GM12878 (cell line): ENCODE measurements at regions of chr2 and their contacts with region 1.

Region 1: DNA sequence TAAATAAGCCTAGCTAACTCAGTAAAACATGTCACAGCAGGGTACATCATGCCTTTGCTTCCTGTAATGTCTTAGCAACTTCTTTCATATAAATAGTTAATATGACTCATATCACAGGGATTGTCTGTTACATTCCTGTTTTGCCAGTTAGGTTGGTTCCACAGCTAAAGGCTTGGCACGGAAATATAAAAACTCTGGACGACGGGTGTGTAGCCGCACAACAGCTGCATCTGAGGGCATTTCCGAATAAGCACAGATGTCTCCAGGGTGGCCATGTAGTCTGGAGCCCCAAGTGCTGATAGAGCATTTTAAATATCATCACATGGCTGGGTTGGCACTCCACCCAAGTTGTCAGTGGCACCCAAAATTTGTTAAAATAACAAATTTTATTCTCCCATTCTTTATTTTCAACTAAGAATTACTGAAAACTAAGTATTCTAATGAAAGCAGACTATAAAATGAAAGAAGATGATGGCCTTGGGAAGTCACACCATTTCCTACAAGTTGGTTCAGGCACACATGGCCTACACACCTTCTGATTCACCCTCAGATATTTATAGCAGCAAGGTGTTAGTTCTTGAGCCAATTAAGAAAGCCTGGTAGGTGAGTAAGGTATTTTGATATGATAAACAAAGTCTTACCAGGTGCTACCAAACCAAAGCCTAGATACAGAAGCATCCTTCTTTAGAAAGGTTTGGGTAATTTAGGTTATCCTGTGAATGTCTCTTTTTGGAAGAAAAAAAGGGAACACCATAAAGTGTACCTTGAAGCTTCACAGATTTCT is 61.8 kb upstream of the STK17B start:
- DNase-seq: no peak
- ATAC-seq: peak; percentile 26
- H3K4me3 ChIP-seq: no peak overlapping the region
- H3K27ac ChIP-seq: peak overlapping the region; percentile 50; the same call in 1 of the 2 replicates
- H3K4me1 ChIP-seq: peaks cover 14% of the 10 kb centered on the region
- H3K27me3 ChIP-seq: no peaks in the 10 kb centered on the region
- CTCF ChIP-seq: no peak
- EP300 ChIP-seq: no peak
- POLR2A ChIP-seq: no peak
- RAD21 ChIP-seq: no peak

Region 2: DNA sequence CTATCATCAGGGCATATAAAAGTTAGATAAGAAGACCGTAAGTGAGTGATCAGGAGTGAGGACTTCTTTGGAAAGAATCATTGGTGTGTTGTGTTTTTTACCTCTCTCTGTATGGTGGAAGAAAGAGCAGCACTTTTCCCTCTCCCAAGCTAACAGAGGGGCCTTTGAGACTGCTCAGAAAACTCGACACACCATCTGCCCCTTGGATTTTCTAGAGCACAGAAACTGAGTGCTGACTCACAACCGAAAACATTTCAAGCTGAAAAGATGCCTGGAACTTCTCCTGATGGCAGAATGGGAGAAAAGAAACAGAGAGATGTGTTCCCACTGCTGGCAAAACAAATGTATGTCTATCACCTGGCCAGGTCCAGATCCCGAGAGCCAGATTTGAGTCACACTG is 321.1 kb before region 1 on chr2:
- CTCF ChIA-PET with region 1: no interaction called
- POLR2A ChIA-PET with region 1: no interaction called
- RAD21 ChIA-PET with region 1: no interaction called
- SMC1A ChIA-PET with region 1: no interaction called
- in situ Hi-C with region 1: no loop called
- intact Hi-C with region 1: no loop called
- DNase-seq: no peak
- ATAC-seq: no peak
- H3K4me3 ChIP-seq: no peak overlapping the region
- H3K27ac ChIP-seq: no peak overlapping the region
- H3K4me1 ChIP-seq: no peaks in the 10 kb centered on the region
- H3K27me3 ChIP-seq: no peaks in the 10 kb centered on the region
- CTCF ChIP-seq: no peak
- EP300 ChIP-seq: no peak
- POLR2A ChIP-seq: no peak
- RAD21 ChIP-seq: no peak

Region 3: DNA sequence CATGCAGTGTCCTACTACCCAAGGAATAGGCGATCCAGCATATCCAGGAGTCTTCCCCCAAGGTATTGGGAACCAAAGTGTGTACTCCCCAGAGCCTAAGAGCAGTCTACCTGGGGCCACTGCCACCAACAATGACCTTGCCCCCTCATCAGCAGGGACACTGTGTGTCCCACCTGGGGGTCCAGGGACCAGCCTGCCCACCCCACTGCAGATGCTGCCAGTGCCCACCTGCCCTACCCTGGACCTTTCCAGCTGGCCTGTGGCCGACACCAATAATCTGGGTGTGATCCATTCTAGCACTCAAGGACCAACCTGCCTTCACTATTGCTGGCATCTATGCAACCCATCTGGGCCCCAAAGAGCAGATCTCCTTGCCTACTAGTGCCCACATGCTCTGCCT is 196.8 kb before region 1 on chr2:
- CTCF ChIA-PET with region 1: no interaction called
- POLR2A ChIA-PET with region 1: no interaction called
- RAD21 ChIA-PET with region 1: no interaction called
- SMC1A ChIA-PET with region 1: no interaction called
- in situ Hi-C with region 1: no loop called
- intact Hi-C with region 1: no loop called
- DNase-seq: no peak
- ATAC-seq: no peak
- H3K4me3 ChIP-seq: no peak overlapping the region
- H3K27ac ChIP-seq: no peak overlapping the region
- H3K4me1 ChIP-seq: no peaks in the 10 kb centered on the region
- H3K27me3 ChIP-seq: no peaks in the 10 kb centered on the region
- CTCF ChIP-seq: no peak
- EP300 ChIP-seq: no peak
- POLR2A ChIP-seq: no peak
- RAD21 ChIP-seq: no peak

Region 4: GRCh38 chr2:196182439-196183171 is 50.6 kb before region 1 on chr2:
- CTCF ChIA-PET with region 1: interaction called, 14 read pairs
- POLR2A ChIA-PET with region 1: interaction called, 26 read pairs
- RAD21 ChIA-PET with region 1: interaction called, 89 read pairs
- SMC1A ChIA-PET with region 1: interaction called, 143 read pairs
- in situ Hi-C with region 1: no loop called
- intact Hi-C with region 1: no loop called
- DNase-seq: peak; percentile 71
- ATAC-seq: peak; percentile 87
- H3K4me3 ChIP-seq: no peak overlapping the region
- H3K27ac ChIP-seq: peak overlapping the region; percentile 42
- H3K4me1 ChIP-seq: peaks cover 27% of the 10 kb centered on the region
- H3K27me3 ChIP-seq: no peaks in the 10 kb centered on the region
- CTCF ChIP-seq: no peak
- EP300 ChIP-seq: peak; percentile 31 to 64
- POLR2A ChIP-seq: no peak
- RAD21 ChIP-seq: no peak

Region 5: GRCh38 chr2:196200557-196200956 is 32.7 kb before region 1 on chr2:
- CTCF ChIA-PET with region 1: interaction called, 8 read pairs
- POLR2A ChIA-PET with region 1: interaction called, 10 read pairs
- RAD21 ChIA-PET with region 1: interaction called, 42 read pairs
- SMC1A ChIA-PET with region 1: interaction called, 52 read pairs
- in situ Hi-C with region 1: no loop called
- intact Hi-C with region 1: no loop called
- DNase-seq: peak; percentile 83
- ATAC-seq: peak; percentile 94
- H3K4me3 ChIP-seq: no peak overlapping the region
- H3K27ac ChIP-seq: peak overlapping the region; percentile 79
- H3K4me1 ChIP-seq: peaks cover 18% of the 10 kb centered on the region
- H3K27me3 ChIP-seq: no peaks in the 10 kb centered on the region
- CTCF ChIP-seq: no peak
- EP300 ChIP-seq: peak; percentile 64 to 65
- POLR2A ChIP-seq: no peak
- RAD21 ChIP-seq: no peak

Region 6: GRCh38 chr2:196220671-196221070 is 12.5 kb before region 1 on chr2:
- CTCF ChIA-PET with region 1: interaction called, 37 read pairs
- POLR2A ChIA-PET with region 1: interaction called, 16 read pairs
- RAD21 ChIA-PET with region 1: interaction called, 13 read pairs
- SMC1A ChIA-PET with region 1: interaction called, 95 read pairs
- in situ Hi-C with region 1: no loop called
- intact Hi-C with region 1: no loop called
- DNase-seq: no peak
- ATAC-seq: no peak
- H3K4me3 ChIP-seq: no peak overlapping the region
- H3K27ac ChIP-seq: no peak overlapping the region
- H3K4me1 ChIP-seq: no peaks in the 10 kb centered on the region
- H3K27me3 ChIP-seq: no peaks in the 10 kb centered on the region
- CTCF ChIP-seq: no peak; a peak in 1 of 6 replicates
- EP300 ChIP-seq: no peak
- POLR2A ChIP-seq: no peak
- RAD21 ChIP-seq: no peak

Region 7: GRCh38 chr2:196263181-196263747 is 30.1 kb after region 1 on chr2:
- CTCF ChIA-PET with region 1: no interaction called
- POLR2A ChIA-PET with region 1: interaction called, 6 read pairs
- RAD21 ChIA-PET with region 1: interaction called, 8 read pairs
- SMC1A ChIA-PET with region 1: interaction called, 56 read pairs
- in situ Hi-C with region 1: no loop called
- intact Hi-C with region 1: no loop called
- DNase-seq: peak; percentile 88
- ATAC-seq: peak; percentile 94
- H3K4me3 ChIP-seq: 0 out of 2 replicates have a peak overlapping the region, but pooled peaks have one; percentile 7
- H3K27ac ChIP-seq: peak overlapping the region; percentile 75
- H3K4me1 ChIP-seq: peaks cover 9% of the 10 kb centered on the region
- H3K27me3 ChIP-seq: no peaks in the 10 kb centered on the region
- CTCF ChIP-seq: no peak
- EP300 ChIP-seq: peak; percentile 20 to 52; a peak in 2 of 4 replicates
- POLR2A ChIP-seq: 0 out of 2 replicates have a peak, but pooled peaks have one; percentile 31
- RAD21 ChIP-seq: no peak